CD8-positive, alpha-beta T cell (primary cell): ENCODE measurements at regions of chr2 and their contacts with region 1.

Region 1: GRCh38 chr2:25041928-25042320 is at the start of gene EFR3B:
- DNase-seq: peak; percentile 70 to 95 (median 88)
- ATAC-seq: peak; percentile 95
- H3K4me3 ChIP-seq: peak within 1 kb of the TSS; percentile 48 to 72
- H3K4me3 Mint-ChIP-seq: peak within 1 kb of the TSS; percentile 90
- H3K27ac ChIP-seq: no peak within 1 kb of the TSS
- H3K27ac Mint-ChIP-seq: peak within 1 kb of the TSS; percentile 6
- H3K4me1 ChIP-seq: peaks cover 17% of the 10 kb centered on the region
- H3K4me1 Mint-ChIP-seq: peaks cover 21% of the 10 kb centered on the region
- H3K27me3 ChIP-seq: peaks cover 3 to 16% of the 10 kb centered on the region in 2 experiments
- H3K27me3 Mint-ChIP-seq: peaks cover 35% of the 10 kb centered on the region
- CTCF ChIP-seq: no peak
- total RNA-seq, gene EFR3B: 0.08 TPM in 1 of 2 experiments, not detected in the other

Region 2: DNA sequence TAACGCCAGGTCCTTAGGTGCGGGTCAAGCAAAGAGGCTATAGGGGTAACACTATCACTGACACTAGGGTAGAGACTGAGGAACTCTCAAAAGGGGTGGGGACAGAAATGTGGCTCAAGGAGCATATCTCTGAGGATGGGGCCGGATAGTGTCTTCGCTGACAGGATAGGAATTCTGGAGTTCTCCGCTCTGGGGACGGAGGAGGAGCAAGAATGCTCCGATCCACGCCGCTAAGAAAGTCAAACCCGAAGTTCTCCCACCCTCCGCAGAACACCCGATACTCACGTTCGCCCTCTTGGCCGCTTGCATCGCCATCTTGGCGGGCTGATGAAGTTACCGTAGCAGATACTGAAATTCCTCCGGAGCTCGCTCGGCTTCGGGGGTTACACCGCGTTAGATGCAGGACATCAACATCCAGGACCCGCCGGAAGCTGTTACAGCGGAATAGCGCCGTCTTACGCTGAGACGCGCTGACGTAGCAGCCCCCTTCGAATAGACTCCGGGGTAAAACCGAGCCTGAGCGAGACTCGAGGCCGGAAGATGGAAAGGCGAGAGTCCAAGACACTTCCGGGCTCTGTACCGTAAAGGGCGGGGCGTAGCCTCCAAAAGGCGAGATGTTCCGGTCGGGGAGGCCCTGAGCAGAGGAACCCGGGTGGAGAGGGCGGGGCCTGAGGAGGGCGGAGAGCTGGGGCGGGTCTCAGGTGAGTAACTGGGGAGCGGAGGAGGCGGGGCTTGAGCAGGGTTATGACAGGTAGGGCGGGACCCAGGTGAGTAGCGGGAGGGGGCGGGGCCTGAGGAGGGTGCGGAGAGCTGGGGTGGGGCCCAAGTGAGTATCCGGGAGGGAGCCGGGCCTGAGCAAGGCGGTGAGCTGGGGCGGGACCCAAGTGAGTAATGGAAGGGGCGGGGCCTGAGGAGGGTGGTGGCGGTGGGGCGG is 965.7 kb before region 1 on chr2 and contains the start of gene SF3B6:
- CTCF ChIA-PET with region 1: no interaction called
- POLR2A ChIA-PET with region 1: no interaction called
- intact Hi-C with region 1: loop called in 1 of 2 experiments (anchors 5 kb)
- DNase-seq: peak; percentile 98 to 100 (median 100)
- ATAC-seq: peak; percentile 83
- H3K4me3 ChIP-seq: peak within 1 kb of the TSS; percentile 87 to 100
- H3K4me3 Mint-ChIP-seq: peak within 1 kb of the TSS; percentile 100
- H3K27ac ChIP-seq: peak within 1 kb of the TSS; percentile 91 to 96
- H3K27ac Mint-ChIP-seq: peak within 1 kb of the TSS; percentile 100
- H3K4me1 ChIP-seq: peaks cover 19% of the 10 kb centered on the region
- H3K4me1 Mint-ChIP-seq: peaks cover 36% of the 10 kb centered on the region
- H3K27me3 ChIP-seq: no peaks in the 10 kb centered on the region
- H3K27me3 Mint-ChIP-seq: no peaks in the 10 kb centered on the region
- CTCF ChIP-seq: no peak
- total RNA-seq, gene SF3B6: 69.7 to 78.9 TPM

Region 3: DNA sequence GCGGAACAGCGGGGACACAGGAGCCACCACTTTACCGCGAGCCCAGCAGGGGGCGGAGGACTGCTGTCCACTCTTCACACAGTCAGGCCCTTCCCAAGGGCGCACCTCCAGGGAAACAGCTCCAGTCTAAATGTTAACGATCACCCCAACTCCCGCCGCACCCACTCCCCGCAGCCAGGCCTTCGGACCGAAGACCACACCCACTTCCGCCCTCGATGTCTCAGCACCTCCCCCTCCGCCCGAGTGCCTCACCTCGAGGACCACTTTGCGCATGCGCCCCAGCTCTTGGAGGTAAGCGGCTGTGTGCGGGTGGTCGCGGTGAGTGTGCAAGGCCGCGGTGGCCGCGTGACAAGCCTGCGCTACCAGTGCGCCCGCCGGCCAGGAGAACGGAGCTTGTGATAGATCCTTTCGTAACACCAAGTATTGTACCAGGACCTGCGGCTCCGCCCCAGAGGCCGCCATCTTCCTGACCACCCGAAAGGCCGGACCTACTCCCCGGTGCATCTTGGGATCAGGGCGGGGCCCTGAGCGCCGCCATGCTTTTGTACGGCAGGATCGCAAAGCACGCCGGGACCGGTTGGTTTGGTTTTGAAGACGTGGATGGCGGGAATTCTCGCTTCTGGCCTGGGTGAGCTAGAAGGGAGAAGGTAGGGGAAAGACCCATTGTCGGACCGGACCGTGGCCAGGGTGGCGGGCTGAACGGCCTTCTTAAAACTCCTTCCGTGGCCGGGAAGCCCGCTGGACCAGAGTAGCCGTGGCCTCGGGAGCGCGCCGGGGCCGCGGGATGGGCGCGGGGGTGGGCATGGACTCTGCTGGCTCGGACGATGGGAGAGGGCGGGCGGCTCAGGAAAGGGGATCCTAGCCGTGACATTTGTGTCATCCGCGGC is 248.8 kb before region 1 on chr2 and contains the starts of genes CENPO and PTRHD1:
- CTCF ChIA-PET with region 1: no interaction called
- POLR2A ChIA-PET with region 1: no interaction called
- intact Hi-C with region 1: loop called in 1 of 2 experiments (anchors 5 kb)
- DNase-seq: peak; percentile 89 to 97 (median 94)
- ATAC-seq: peak; percentile 96
- H3K4me3 ChIP-seq: peak within 1 kb of the TSS; percentile 92 to 97
- H3K4me3 Mint-ChIP-seq: peak within 1 kb of the TSS; percentile 98
- H3K27ac ChIP-seq: peak within 1 kb of the TSS; percentile 90 to 98
- H3K27ac Mint-ChIP-seq: peak within 1 kb of the TSS; percentile 99
- H3K4me1 ChIP-seq: peaks cover 12% of the 10 kb centered on the region
- H3K4me1 Mint-ChIP-seq: peaks cover 18% of the 10 kb centered on the region
- H3K27me3 ChIP-seq: no peaks in the 10 kb centered on the region
- H3K27me3 Mint-ChIP-seq: no peaks in the 10 kb centered on the region
- CTCF ChIP-seq: peak; percentile 68
- total RNA-seq, gene CENPO: 3.4 to 3.6 TPM
- total RNA-seq, gene PTRHD1: 12.2 to 19.0 TPM

Region 4: DNA sequence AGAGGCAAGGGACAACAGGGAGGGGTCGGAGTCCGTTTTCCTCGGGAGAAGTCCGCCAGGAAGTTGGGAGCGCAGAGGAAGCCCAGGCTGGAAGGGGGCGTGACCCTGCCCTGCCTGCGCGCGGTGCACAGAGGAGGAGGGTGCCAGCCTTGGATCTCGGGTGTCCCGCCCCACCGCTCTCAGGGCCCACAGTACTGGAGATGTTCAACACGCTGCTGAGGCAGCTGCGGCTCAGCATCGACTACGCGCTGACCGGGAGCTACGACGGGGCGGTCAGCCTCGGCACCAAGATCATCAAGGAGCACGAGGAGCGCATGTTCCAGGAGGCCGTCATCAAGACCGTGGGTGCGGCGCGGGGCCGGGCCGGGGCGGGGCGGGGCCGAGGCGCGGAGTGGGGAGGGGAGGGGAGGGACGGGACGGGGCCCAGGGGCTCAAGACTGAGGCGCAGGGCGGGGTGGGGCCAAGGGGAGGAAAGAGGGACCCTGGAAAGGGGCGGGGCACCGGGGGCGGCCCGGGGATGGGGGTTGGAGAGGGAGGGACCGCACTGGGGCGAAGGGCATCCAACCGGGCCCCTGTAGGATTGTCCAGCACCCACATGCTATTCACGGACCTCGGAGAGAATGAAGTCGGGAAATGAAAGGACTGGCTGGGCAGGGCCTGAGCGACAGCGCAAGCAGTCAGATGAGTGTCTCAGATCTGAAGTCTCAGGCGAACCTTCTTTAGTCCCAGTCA is 89.8 kb after region 1 on chr2:
- CTCF ChIA-PET with region 1: no interaction called
- POLR2A ChIA-PET with region 1: no interaction called
- intact Hi-C with region 1: loop called (anchors 1 to 2 kb)
- DNase-seq: peak in 3 of 9 experiments; percentile 21 to 27 (median 25)
- ATAC-seq: peak; percentile 34
- H3K4me3 ChIP-seq: no peak overlapping the region
- H3K4me3 Mint-ChIP-seq: peak overlapping the region; percentile 77
- H3K27ac ChIP-seq: no peak overlapping the region
- H3K27ac Mint-ChIP-seq: no peak overlapping the region
- H3K4me1 ChIP-seq: no peaks in the 10 kb centered on the region
- H3K4me1 Mint-ChIP-seq: peaks cover 12% of the 10 kb centered on the region
- H3K27me3 ChIP-seq: peaks cover 18 to 22% of the 10 kb centered on the region in 2 experiments
- H3K27me3 Mint-ChIP-seq: peaks cover 48% of the 10 kb centered on the region
- CTCF ChIP-seq: no peak

Region 5: GRCh38 chr2:25197336-25198208 is 155.6 kb after region 1 on chr2:
- CTCF ChIA-PET with region 1: no interaction called
- POLR2A ChIA-PET with region 1: no interaction called
- intact Hi-C with region 1: loop called in 1 of 2 experiments (anchors 10 kb)
- DNase-seq: no peak
- ATAC-seq: no peak
- H3K4me3 ChIP-seq: no peak overlapping the region
- H3K4me3 Mint-ChIP-seq: no peak overlapping the region
- H3K27ac ChIP-seq: no peak overlapping the region
- H3K27ac Mint-ChIP-seq: no peak overlapping the region
- H3K4me1 ChIP-seq: peaks cover 12% of the 10 kb centered on the region
- H3K4me1 Mint-ChIP-seq: peaks cover 14% of the 10 kb centered on the region
- H3K27me3 ChIP-seq: no peaks in the 10 kb centered on the region
- H3K27me3 Mint-ChIP-seq: no peaks in the 10 kb centered on the region
- CTCF ChIP-seq: no peak

Region 6: DNA sequence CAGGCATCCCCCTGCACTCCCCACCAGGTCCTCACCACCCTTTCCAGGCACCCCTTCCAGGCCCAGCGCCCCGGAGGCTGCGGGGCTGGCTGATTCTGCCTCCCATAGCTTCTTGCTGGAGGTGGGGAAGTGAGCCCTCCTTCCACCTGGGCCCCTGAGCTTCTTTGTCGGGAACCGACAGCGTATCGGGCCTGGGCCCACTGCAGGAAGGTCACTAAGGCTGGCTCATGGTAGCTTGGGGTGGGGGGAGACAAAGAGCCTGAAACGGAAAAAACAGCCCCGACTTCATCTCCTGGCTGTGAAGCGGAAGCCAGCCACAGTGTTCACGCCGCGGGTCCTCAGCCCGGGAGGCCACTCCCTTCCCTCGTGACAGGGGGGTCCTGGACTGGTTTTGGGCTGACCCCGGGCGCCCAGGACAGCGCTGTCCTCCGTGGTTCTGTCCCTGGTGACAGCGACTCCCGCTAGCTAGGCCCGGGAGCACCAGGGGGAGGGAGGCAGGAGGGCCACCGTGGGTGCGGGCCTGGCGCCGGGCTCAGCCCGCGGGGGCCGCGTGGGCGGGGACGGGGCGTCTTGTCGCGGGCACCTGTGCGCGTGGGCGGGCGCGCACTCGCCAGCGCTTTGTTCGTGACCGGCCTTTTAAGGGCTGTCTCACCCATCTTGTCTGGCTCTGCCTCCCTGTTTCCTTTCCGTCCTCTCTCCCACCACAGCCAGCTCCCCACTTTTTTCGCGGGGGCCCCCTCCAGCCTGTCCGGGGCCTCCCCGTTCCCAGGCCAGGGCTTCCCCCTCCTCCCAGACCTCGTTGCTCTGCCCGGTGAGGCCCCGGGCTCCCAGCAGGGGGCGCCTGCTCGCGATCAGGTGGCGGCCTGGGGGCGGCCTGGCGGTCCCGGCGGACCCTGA is 234.9 kb after region 1 on chr2:
- CTCF ChIA-PET with region 1: no interaction called
- POLR2A ChIA-PET with region 1: no interaction called
- intact Hi-C with region 1: no loop called
- DNase-seq: peak; percentile 47 to 87 (median 74)
- ATAC-seq: peak; percentile 35
- H3K4me3 ChIP-seq: peak overlapping the region; percentile 55 to 57
- H3K4me3 Mint-ChIP-seq: peak overlapping the region; percentile 76
- H3K27ac ChIP-seq: peak overlapping the region; percentile 76 to 95
- H3K27ac Mint-ChIP-seq: peak overlapping the region; percentile 99
- H3K4me1 ChIP-seq: peaks cover 85% of the 10 kb centered on the region
- H3K4me1 Mint-ChIP-seq: peaks cover 81% of the 10 kb centered on the region
- H3K27me3 ChIP-seq: no peaks in the 10 kb centered on the region
- H3K27me3 Mint-ChIP-seq: no peaks in the 10 kb centered on the region
- CTCF ChIP-seq: peak; percentile 91

Region 7: GRCh38 chr2:26033818-26034636 is 992.1 kb after region 1 on chr2 and contains the start of gene RAB10:
- CTCF ChIA-PET with region 1: no interaction called
- POLR2A ChIA-PET with region 1: no interaction called
- intact Hi-C with region 1: loop called in 1 of 2 experiments (anchors 5 kb)
- DNase-seq: peak; percentile 98 to 100 (median 99)
- ATAC-seq: peak; percentile 89
- H3K4me3 ChIP-seq: peak within 1 kb of the TSS; percentile 82 to 99
- H3K4me3 Mint-ChIP-seq: peak within 1 kb of the TSS; percentile 95
- H3K27ac ChIP-seq: peak within 1 kb of the TSS; percentile 92 to 93
- H3K27ac Mint-ChIP-seq: peak within 1 kb of the TSS; percentile 98
- H3K4me1 ChIP-seq: peaks cover 29% of the 10 kb centered on the region
- H3K4me1 Mint-ChIP-seq: peaks cover 40% of the 10 kb centered on the region
- H3K27me3 ChIP-seq: no peaks in the 10 kb centered on the region
- H3K27me3 Mint-ChIP-seq: no peaks in the 10 kb centered on the region
- CTCF ChIP-seq: no peak
- total RNA-seq, gene RAB10: 12.7 TPM